ENCODE measurements at regions of chr9 and their contacts with region 1.

Region 1: DNA sequence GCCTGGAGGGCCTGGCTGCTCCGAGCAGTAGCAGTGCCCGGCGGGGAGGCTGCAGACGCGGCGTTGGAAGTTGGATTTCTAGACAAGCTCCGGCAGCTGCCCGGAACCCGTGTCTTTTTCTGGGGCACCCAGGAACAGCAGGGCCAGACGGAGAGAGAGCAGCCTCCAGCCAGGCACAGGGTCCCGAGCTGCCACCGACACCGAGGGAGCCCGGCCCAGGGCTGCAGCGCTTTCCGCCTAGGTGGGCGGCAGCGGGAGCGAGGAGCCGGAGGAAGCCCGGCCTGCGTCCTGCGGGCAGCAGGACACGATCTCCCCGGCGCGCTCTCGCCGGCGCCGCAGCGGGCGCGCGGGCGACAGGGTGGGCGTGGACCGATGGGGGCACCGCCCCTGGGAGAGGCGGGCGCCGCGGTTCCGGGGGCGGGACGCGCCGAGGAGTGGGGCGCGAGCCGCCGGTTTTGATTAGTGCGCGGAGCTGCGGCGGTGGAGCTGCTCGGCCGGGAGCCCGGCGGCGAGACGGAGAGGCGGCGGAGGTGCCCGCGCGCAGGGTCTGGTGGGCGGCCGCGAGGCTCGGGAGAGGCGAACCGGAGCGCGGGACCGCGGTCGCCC is at the start of gene UGCG:
- DNase-seq: peak; percentile 68 to 94 (median 84)
- ATAC-seq: peak; percentile 86
- H3K4me3 ChIP-seq: peak within 1 kb of the TSS; percentile 88
- H3K4me3 Mint-ChIP-seq: peak within 1 kb of the TSS; percentile 98
- H3K27ac ChIP-seq: peak within 1 kb of the TSS; percentile 64 to 67
- H3K27ac Mint-ChIP-seq: no peak within 1 kb of the TSS
- H3K4me1 ChIP-seq: peaks cover 25% of the 10 kb centered on the region
- H3K4me1 Mint-ChIP-seq: peaks cover 31% of the 10 kb centered on the region
- H3K27me3 ChIP-seq: no peaks in the 10 kb centered on the region
- H3K27me3 Mint-ChIP-seq: no peaks in the 10 kb centered on the region
- CTCF ChIP-seq: no peak
- total RNA-seq, gene UGCG: 42.1 to 44.0 TPM

Region 2: GRCh38 chr9:111631071-111631971 is 265.1 kb before region 1 on chr9 and contains the start of gene DNAJC25:
- CTCF ChIA-PET with region 1: no interaction called
- POLR2A ChIA-PET with region 1: interaction called, 3 read pairs
- intact Hi-C with region 1: loop called in 1 of 2 experiments (anchors 10 kb)
- DNase-seq: peak; percentile 91 to 100 (median 96)
- ATAC-seq: peak; percentile 92
- H3K4me3 ChIP-seq: peak within 1 kb of the TSS; percentile 74
- H3K4me3 Mint-ChIP-seq: peak within 1 kb of the TSS; percentile 99
- H3K27ac ChIP-seq: peak within 1 kb of the TSS; percentile 3 to 75
- H3K27ac Mint-ChIP-seq: peak within 1 kb of the TSS; percentile 90
- H3K4me1 ChIP-seq: peaks cover 18% of the 10 kb centered on the region
- H3K4me1 Mint-ChIP-seq: peaks cover 58% of the 10 kb centered on the region
- H3K27me3 ChIP-seq: no peaks in the 10 kb centered on the region
- H3K27me3 Mint-ChIP-seq: no peaks in the 10 kb centered on the region
- CTCF ChIP-seq: no peak
- total RNA-seq, gene DNAJC25: 4.5 to 4.8 TPM

Region 3: DNA sequence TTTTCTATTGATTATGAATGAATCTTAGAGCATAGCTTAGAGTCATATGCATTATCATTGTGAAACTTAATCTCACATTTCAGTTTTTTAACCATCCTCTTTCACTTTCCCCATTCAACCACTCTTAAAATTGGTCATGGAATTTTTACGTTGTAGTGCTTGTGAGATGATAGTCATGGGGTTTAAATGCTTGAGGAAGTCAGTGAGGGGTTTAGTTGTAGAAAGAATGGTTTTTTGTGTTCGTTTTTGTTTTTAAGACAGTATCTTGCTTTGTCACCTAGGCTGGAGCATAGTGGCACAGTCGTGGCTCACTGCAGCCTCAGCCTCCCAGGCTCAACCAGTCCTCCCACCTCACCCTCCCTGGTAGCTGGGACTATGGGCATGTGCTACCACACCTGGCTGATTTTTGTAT is 19.8 kb after region 1 on chr9:
- CTCF ChIA-PET with region 1: interaction called, 4 read pairs
- POLR2A ChIA-PET with region 1: interaction called, 19 read pairs
- intact Hi-C with region 1: loop called (anchors 2 kb)
- DNase-seq: peak in 1 of 14 experiments; percentile 27
- ATAC-seq: no peak
- H3K4me3 ChIP-seq: no peak overlapping the region
- H3K4me3 Mint-ChIP-seq: peak overlapping the region; percentile 25
- H3K27ac ChIP-seq: no peak overlapping the region
- H3K27ac Mint-ChIP-seq: peak overlapping the region; percentile 66
- H3K4me1 ChIP-seq: peaks cover 31% of the 10 kb centered on the region
- H3K4me1 Mint-ChIP-seq: peaks cover 63% of the 10 kb centered on the region
- H3K27me3 ChIP-seq: no peaks in the 10 kb centered on the region
- H3K27me3 Mint-ChIP-seq: no peaks in the 10 kb centered on the region
- CTCF ChIP-seq: no peak

Region 4: GRCh38 chr9:112002131-112002846 is 105.8 kb after region 1 on chr9:
- CTCF ChIA-PET with region 1: no interaction called
- POLR2A ChIA-PET with region 1: interaction called, 27 read pairs
- intact Hi-C with region 1: no loop called
- DNase-seq: peak in 13 of 14 experiments; percentile 11 to 75 (median 26)
- ATAC-seq: peak; percentile 93
- H3K4me3 ChIP-seq: no peak overlapping the region
- H3K4me3 Mint-ChIP-seq: peak overlapping the region; percentile 16
- H3K27ac ChIP-seq: peak overlapping the region in 1 of 2 donors; percentile 56
- H3K27ac Mint-ChIP-seq: peak overlapping the region; percentile 82
- H3K4me1 ChIP-seq: peaks cover 44% of the 10 kb centered on the region
- H3K4me1 Mint-ChIP-seq: peaks cover 50% of the 10 kb centered on the region
- H3K27me3 ChIP-seq: no peaks in the 10 kb centered on the region
- H3K27me3 Mint-ChIP-seq: no peaks in the 10 kb centered on the region
- CTCF ChIP-seq: no peak

Region 5: GRCh38 chr9:112074250-112075008 is 178.0 kb after region 1 on chr9:
- CTCF ChIA-PET with region 1: interaction called, 4 read pairs
- POLR2A ChIA-PET with region 1: interaction called, 24 read pairs
- intact Hi-C with region 1: loop called (anchors 5 to 10 kb)
- DNase-seq: peak; percentile 49 to 86 (median 66)
- ATAC-seq: peak; percentile 91
- H3K4me3 ChIP-seq: no peak overlapping the region
- H3K4me3 Mint-ChIP-seq: peak overlapping the region; percentile 17
- H3K27ac ChIP-seq: no peak overlapping the region
- H3K27ac Mint-ChIP-seq: peak overlapping the region; percentile 16
- H3K4me1 ChIP-seq: peaks cover 26% of the 10 kb centered on the region
- H3K4me1 Mint-ChIP-seq: peaks cover 33% of the 10 kb centered on the region
- H3K27me3 ChIP-seq: no peaks in the 10 kb centered on the region
- H3K27me3 Mint-ChIP-seq: no peaks in the 10 kb centered on the region
- CTCF ChIP-seq: peak; percentile 96

Region 6: DNA sequence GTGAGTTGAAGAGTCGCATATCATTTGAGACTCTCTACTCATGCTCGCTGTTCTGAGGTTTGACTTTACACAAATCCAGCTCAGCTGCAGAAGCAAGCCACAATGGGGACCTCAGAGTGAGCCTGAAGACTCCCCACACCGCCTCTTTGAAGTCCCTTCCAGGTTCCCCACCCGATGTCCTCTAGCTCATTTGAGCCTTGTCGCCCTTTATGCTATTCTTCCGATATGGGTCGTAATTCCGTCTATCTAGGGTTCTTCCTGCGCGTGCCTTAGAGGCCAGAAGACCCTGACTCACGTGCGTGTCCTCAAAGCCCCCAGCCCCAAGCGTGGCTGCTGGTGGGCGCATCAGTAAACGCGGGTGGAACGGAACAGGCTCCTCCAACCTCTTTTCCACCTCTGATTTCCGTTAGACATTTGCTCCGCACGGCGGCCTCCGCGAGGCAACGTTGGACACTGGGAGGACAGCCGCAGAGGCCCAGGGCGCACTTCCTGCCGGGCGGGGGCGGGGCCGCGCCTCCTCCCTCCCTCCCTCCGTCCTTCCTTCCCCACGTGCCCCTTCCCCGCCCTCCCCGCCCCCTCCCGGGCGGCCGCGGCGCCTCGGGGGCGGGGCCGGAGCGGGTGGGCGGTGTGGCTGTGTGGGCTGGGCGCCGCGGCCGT is 853.8 kb after region 1 on chr9 and contains the start of gene SNX30:
- CTCF ChIA-PET with region 1: no interaction called
- POLR2A ChIA-PET with region 1: no interaction called
- intact Hi-C with region 1: loop called in 1 of 2 experiments (anchors 10 kb)
- DNase-seq: peak; percentile 49 to 92 (median 78)
- ATAC-seq: peak; percentile 65
- H3K4me3 ChIP-seq: peak within 1 kb of the TSS; percentile 81
- H3K4me3 Mint-ChIP-seq: peak within 1 kb of the TSS; percentile 91
- H3K27ac ChIP-seq: peak within 1 kb of the TSS; percentile 60 to 79
- H3K27ac Mint-ChIP-seq: peak within 1 kb of the TSS; percentile 81
- H3K4me1 ChIP-seq: peaks cover 55% of the 10 kb centered on the region
- H3K4me1 Mint-ChIP-seq: peaks cover 59% of the 10 kb centered on the region
- H3K27me3 ChIP-seq: no peaks in the 10 kb centered on the region
- H3K27me3 Mint-ChIP-seq: no peaks in the 10 kb centered on the region
- CTCF ChIP-seq: no peak
- total RNA-seq, gene SNX30: 5.2 to 5.8 TPM